HepG2 (cell line): ENCODE measurements at regions of chr1 and their contacts with region 1.

Region 1: DNA sequence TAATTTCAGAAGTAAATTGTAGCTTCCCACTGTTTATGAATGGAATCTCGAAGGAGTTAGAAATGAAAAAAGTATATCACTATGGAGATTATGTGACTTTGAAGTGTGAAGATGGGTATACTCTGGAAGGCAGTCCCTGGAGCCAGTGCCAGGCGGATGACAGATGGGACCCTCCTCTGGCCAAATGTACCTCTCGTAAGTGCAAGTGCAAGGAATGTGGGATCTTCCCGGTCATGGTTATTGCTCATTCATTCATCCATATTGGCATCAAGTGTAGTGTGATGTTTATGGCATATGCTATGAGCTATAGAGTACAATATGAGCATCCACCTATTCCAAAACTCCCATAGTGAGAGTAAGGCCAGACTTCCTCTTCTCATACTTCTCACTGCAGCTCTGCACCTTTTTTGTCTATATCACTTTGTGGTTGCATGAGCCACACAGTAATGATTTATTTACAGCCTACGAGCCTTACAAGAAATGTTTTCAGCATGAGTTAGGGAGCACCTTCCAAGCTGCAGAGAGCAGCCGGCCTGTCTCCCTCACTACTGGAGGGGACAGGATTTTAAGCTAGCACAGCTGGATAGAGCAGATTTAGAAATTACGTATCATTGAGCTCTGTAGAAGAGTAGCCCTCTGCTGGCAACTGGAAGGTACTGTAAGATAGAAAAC is 24.9 kb upstream of the CR1L start:
- DNase-seq: peak; percentile 35
- ATAC-seq: peak; percentile 94
- H3K4me3 ChIP-seq: no peak overlapping the region
- H3K27ac ChIP-seq: no peak overlapping the region
- H3K4me1 ChIP-seq: no peaks in the 10 kb centered on the region
- H3K27me3 ChIP-seq: no peaks in the 10 kb centered on the region
- CTCF ChIP-seq: peak; percentile 63
- EP300 ChIP-seq: no peak
- POLR2A ChIP-seq: no peak
- RAD21 ChIP-seq: 0 out of 2 replicates have a peak, but pooled peaks have one; percentile 25

Region 2: GRCh38 chr1:207579436-207579799 is 40.6 kb before region 1 on chr1:
- CTCF ChIA-PET with region 1: interaction called, 17 read pairs
- POLR2A ChIA-PET with region 1: no interaction called
- in situ Hi-C with region 1: no loop called
- intact Hi-C with region 1: loop called (anchors 1 kb)
- DNase-seq: peak; percentile 41
- ATAC-seq: peak; percentile 96
- H3K4me3 ChIP-seq: no peak overlapping the region
- H3K27ac ChIP-seq: no peak overlapping the region
- H3K4me1 ChIP-seq: no peaks in the 10 kb centered on the region
- H3K27me3 ChIP-seq: no peaks in the 10 kb centered on the region
- CTCF ChIP-seq: peak; percentile 73
- EP300 ChIP-seq: no peak
- POLR2A ChIP-seq: no peak
- RAD21 ChIP-seq: no peak

Region 3: DNA sequence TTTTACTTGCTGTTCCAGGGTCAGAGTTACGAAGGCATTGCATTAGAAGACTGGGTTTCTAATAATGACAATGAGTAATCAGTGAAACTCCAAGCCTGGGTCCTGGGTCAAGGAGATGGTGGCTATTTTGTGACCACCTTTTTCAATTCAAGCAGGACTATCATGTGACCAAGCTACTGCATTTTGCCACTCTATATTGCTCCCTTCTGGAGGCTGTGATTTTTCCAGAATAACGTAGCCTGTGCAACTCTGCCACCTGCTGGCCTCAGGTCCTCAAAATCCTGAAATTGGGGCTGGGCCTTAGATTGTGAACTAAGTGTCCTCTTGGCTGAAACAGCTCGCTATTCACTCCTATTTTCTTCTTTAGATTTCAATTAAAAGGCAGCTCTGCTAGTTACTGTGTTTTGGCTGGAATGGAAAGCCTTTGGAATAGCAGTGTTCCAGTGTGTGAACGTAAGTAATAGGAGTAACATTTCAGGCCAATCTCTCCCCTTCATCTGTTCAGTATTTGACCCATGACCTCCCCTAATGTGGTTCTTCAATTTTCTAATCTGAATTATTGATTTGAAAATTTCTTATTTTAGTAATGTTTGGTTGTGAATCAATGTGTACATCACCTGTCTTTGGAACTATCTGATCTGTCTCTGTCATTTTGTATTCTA is 78.9 kb after region 1 on chr1:
- CTCF ChIA-PET with region 1: no interaction called
- POLR2A ChIA-PET with region 1: no interaction called
- in situ Hi-C with region 1: no loop called
- intact Hi-C with region 1: loop called (anchors 2 kb)
- DNase-seq: peak; percentile 44
- ATAC-seq: peak; percentile 93
- H3K4me3 ChIP-seq: no peak overlapping the region
- H3K27ac ChIP-seq: no peak overlapping the region
- H3K4me1 ChIP-seq: no peaks in the 10 kb centered on the region
- H3K27me3 ChIP-seq: no peaks in the 10 kb centered on the region
- CTCF ChIP-seq: peak; percentile 74
- EP300 ChIP-seq: no peak
- POLR2A ChIP-seq: no peak
- RAD21 ChIP-seq: no peak; the same call in 1 of the 2 replicates